ENCODE measurements at regions of chr1 and their contacts with region 1.

Region 1: DNA sequence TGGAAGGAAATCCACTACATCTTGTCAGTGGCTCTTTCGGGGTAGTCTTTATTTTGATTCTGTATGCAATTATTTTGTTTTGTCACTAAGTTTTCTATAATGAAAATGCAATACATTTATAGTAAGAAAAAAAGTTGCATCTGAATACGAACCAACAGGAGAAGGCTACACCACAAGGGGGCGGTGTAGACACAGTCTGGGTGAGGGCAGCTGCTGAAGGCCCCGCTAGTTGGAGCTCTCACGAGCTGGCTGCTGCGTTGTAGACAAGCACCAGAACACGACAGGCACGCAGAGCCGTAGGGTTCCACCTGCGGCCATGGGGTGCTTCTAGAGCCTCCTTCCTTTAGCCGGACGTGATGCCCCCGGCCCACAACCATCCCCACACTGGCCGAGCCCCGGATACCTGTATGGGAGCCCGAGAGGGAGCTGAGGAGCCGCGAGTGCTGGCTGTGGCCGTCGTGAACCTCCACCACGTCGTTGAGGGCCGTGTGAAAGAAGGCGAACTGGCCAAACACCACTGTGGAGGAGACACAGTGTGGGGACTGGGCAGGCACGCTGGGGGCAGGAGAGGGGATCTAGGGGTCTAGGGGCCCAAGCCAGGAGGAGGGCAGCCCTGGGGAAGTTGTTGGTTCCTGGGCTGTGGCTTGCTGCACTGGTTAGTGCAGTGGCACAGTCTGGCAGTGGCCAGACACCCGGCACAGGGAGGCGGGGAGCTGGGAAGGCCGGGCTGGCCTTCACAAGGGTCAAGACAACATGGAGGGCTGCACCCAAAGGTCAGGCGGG is 160.8 kb downstream of the ZSCAN20 start:
- DNase-seq: peak; percentile 76
- H3K4me3 Mint-ChIP-seq: no peak overlapping the region
- H3K27ac Mint-ChIP-seq: no peak overlapping the region
- H3K4me1 Mint-ChIP-seq: no peaks in the 10 kb centered on the region
- H3K27me3 Mint-ChIP-seq: peaks cover 12% of the 10 kb centered on the region

Region 2: GRCh38 chr1:33517596-33518250 is 115.5 kb before region 1 on chr1:
- intact Hi-C with region 1: no loop called
- DNase-seq: no peak
- H3K4me3 Mint-ChIP-seq: no peak overlapping the region
- H3K27ac Mint-ChIP-seq: no peak overlapping the region
- H3K4me1 Mint-ChIP-seq: no peaks in the 10 kb centered on the region
- H3K27me3 Mint-ChIP-seq: no peaks in the 10 kb centered on the region

Region 3: GRCh38 chr1:34162852-34163766 is 529.9 kb after region 1 on chr1:
- intact Hi-C with region 1: loop called (anchors 2 kb)
- DNase-seq: peak; percentile 4
- H3K4me3 Mint-ChIP-seq: peak overlapping the region; percentile 65
- H3K27ac Mint-ChIP-seq: peak overlapping the region; percentile 23
- H3K4me1 Mint-ChIP-seq: peaks cover 10% of the 10 kb centered on the region
- H3K27me3 Mint-ChIP-seq: peaks cover 64% of the 10 kb centered on the region